CD14-positive monocyte (primary cell): ENCODE measurements at regions of chr5 and their contacts with region 1.

Region 1: DNA sequence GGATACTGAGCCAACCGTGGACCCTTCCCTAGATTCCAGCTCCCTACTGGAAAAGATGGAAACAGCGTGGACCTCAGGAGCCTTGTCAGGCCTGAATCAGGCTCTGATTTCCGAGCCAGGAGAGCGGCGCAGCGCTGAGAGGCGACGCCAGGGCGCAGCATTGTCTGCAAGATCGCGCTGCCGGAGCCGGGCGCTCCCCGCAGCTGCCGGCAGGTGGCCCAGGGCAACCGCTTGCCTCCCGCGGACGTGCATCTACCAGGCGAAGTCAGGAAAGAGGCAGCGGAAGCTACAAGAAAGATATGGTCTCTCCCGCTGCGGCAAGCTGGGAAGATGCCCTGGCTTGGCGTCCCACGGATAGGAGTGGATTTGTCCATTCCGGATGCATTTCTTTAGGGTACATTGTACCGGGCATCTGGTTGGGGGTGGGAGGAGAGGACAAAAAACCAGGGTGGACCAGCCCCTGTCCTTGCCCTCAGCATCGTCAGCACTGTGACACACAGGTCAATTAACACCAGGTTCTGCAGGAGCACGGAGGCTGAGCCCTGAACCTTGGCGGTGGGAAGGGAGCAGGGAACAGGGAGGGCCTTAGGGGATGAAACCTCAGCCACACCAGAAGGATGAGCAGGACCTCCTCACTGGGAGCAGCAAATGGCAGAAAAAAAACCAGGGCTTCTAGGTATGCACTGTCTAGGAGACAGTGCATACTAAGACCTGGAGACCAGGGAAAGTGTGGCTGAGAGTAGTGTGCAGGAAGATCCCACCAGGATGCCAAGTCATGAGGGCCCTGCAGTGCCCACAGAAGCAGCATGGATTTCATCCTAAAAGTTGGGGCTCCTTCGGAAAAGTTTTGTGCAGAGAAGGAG is 55.9 kb downstream of the SFXN1 start:
- DNase-seq: peak; percentile 79 to 85 (median 84)
- H3K4me3 ChIP-seq: no peak overlapping the region
- H3K4me3 Mint-ChIP-seq: peak overlapping the region; percentile 53 to 75
- H3K27ac ChIP-seq: no peak overlapping the region
- H3K27ac Mint-ChIP-seq: no peak overlapping the region
- H3K4me1 ChIP-seq: peaks cover 8 to 15% of the 10 kb centered on the region in 2 donors
- H3K4me1 Mint-ChIP-seq: peaks cover 11% of the 10 kb centered on the region
- H3K27me3 ChIP-seq: no peaks in the 10 kb centered on the region
- H3K27me3 Mint-ChIP-seq: peaks cover 0 to 5% (median 3%) of the 10 kb centered on the region in 3 donors
- CTCF ChIP-seq: peak; percentile 100

Region 2: DNA sequence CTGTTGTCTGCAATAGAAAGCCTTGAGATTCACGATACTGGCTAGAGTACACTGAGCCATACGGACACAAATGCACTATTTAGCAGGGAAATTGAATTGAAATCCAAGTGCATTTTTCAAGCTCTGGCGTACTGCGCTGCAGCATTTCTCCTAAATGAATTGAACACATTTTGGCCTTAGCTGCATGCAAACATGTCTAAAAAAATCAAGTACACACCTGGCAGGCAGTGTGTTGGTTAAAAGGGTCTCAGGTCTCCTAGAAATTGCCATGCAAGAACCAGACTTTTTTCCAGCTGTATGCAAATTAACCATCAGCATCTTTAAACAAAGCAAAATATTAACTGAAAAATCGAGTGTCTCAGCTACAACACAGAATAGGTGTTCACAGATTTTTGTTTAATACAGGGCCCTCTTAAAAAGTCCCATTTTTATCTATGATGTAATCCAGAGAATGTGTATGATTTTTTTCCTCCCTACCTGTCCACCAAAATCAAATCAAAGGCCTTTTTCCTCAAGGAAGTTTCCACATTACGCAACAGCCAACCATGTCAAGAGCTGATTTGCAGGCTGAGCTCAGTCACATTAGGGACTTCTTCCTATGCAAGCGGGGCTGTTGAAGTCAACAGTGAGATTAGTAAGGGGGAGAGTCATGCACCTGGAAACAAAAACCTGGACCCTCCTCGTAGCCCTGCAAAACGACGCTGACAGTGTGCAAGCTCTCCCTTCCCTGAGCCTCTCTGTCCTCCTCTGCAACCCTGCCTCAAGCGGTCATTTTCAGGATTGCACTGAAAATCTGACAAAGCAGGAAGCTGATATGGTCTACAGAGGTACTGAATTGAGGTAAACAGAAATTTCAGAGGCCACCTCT is 70.0 kb before region 1 on chr5:
- intact Hi-C with region 1: no loop called
- DNase-seq: peak; percentile 6 to 29 (median 7)
- H3K4me3 ChIP-seq: no peak overlapping the region
- H3K4me3 Mint-ChIP-seq: peak overlapping the region in 1 of 2 donors; percentile 8
- H3K27ac ChIP-seq: no peak overlapping the region
- H3K27ac Mint-ChIP-seq: no peak overlapping the region
- H3K4me1 ChIP-seq: no peaks in the 10 kb centered on the region
- H3K4me1 Mint-ChIP-seq: peaks cover 4% of the 10 kb centered on the region
- H3K27me3 ChIP-seq: peaks cover 2 to 5% of the 10 kb centered on the region in 2 donors
- H3K27me3 Mint-ChIP-seq: peaks cover 18 to 24% (median 20%) of the 10 kb centered on the region in 3 donors
- CTCF ChIP-seq: peak; percentile 74

Region 3: GRCh38 chr5:175572886-175573285 is 38.6 kb after region 1 on chr5:
- intact Hi-C with region 1: no loop called
- DNase-seq: no peak
- H3K4me3 ChIP-seq: no peak overlapping the region
- H3K4me3 Mint-ChIP-seq: no peak overlapping the region
- H3K27ac ChIP-seq: no peak overlapping the region
- H3K27ac Mint-ChIP-seq: no peak overlapping the region
- H3K4me1 ChIP-seq: peaks cover 6 to 7% of the 10 kb centered on the region in 2 donors
- H3K4me1 Mint-ChIP-seq: peaks cover 7% of the 10 kb centered on the region
- H3K27me3 ChIP-seq: no peaks in the 10 kb centered on the region
- H3K27me3 Mint-ChIP-seq: peaks cover 9 to 17% (median 11%) of the 10 kb centered on the region in 3 donors
- CTCF ChIP-seq: no peak

Region 4: GRCh38 chr5:175718401-175719108 is 184.3 kb after region 1 on chr5:
- intact Hi-C with region 1: loop called (anchors 1 to 2 kb)
- DNase-seq: peak; percentile 66 to 76 (median 70)
- H3K4me3 ChIP-seq: no peak overlapping the region
- H3K4me3 Mint-ChIP-seq: no peak overlapping the region
- H3K27ac ChIP-seq: no peak overlapping the region
- H3K27ac Mint-ChIP-seq: peak overlapping the region in 1 of 7 donors; percentile 2
- H3K4me1 ChIP-seq: peaks cover 0 to 8% of the 10 kb centered on the region in 2 donors
- H3K4me1 Mint-ChIP-seq: peaks cover 18% of the 10 kb centered on the region
- H3K27me3 ChIP-seq: no peaks in the 10 kb centered on the region
- H3K27me3 Mint-ChIP-seq: peaks cover 2 to 4% (median 3%) of the 10 kb centered on the region in 3 donors
- CTCF ChIP-seq: peak; percentile 93

Region 5: GRCh38 chr5:175873088-175873454 is 338.8 kb after region 1 on chr5:
- intact Hi-C with region 1: loop called in 1 of 2 experiments (anchors 10 kb)
- DNase-seq: peak; percentile 15 to 31 (median 31)
- H3K4me3 ChIP-seq: no peak overlapping the region
- H3K4me3 Mint-ChIP-seq: peak overlapping the region; percentile 42 to 80
- H3K27ac ChIP-seq: no peak overlapping the region
- H3K27ac Mint-ChIP-seq: no peak overlapping the region
- H3K4me1 ChIP-seq: peaks cover 14 to 16% of the 10 kb centered on the region in 2 donors
- H3K4me1 Mint-ChIP-seq: peaks cover 11% of the 10 kb centered on the region
- H3K27me3 ChIP-seq: peaks cover 24 to 72% of the 10 kb centered on the region in 2 donors
- H3K27me3 Mint-ChIP-seq: peaks cover 49 to 79% (median 51%) of the 10 kb centered on the region in 3 donors
- CTCF ChIP-seq: peak; percentile 45